PC-3 (cell line): ENCODE measurements at regions of chr17 and their contacts with region 1.

Region 1: DNA sequence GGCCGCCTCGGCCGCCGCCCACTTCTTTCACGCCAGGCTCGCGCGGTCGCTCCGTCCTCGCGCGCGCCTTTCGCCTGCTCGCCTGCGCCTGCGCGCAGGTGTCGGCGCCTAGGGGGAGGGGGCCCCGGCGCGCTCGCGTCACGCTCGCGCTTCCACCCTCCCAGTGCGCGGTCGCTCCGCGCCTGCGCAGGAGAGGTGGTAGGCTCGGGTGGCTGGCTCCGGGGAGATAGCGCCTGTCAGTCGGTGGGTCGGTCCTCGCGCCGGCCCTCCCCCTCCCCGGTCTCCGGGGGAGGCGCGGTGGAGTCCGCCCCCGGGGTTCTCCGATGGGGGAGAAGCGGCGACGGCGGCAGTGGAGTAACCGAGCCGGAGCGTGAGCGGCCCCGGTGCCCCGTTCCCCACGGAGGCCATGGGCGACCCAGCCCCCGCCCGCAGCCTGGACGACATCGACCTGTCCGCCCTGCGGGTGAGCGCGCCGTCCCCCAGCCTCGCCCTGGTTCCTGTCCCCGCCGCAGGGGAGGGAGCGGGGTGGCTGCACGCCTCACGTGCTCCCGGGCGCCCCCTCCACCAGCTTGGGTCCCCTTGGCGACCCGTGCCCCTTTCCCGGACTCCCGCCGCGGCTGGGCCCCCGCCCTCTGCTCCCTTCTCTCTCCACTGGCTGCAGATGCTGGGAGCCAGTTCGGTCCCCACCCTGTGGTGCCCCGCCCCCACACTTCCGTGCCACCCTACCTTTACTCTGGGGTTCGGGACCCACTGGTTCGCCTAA is at the start of gene MINK1:
- DNase-seq: peak; percentile 95
- ATAC-seq: peak; percentile 83
- H3K4me3 ChIP-seq: peak within 1 kb of the TSS; percentile 97
- H3K27ac ChIP-seq: peak within 1 kb of the TSS; percentile 60
- H3K4me1 ChIP-seq: peaks cover 24% of the 10 kb centered on the region
- H3K27me3 ChIP-seq: no peaks in the 10 kb centered on the region
- CTCF ChIP-seq: no peak
- total RNA-seq, gene MINK1: 44.5 and 64.8 TPM in 2 replicates

Region 2: DNA sequence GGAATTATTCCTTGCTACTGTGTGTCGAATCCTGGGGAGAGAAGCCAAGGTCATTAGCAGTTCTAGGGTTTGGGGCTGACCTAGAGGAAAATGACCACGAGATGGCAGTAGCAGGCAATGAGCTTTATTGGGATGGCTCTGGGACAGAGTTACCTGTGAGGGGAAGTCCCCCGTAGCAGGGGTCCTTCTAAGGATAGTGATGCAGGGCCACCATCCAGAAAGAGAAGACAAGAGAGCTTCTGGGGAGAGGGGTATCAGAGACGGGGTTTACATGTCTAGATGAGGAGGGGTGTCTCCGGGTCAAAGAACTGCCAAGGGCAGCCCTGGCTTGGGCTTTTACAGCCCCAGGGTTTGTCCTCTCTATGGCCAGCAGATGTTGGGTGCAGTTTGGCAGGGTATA is 266.6 kb before region 1 on chr17:
- CTCF ChIA-PET with region 1: no interaction called
- POLR2A ChIA-PET with region 1: no interaction called
- intact Hi-C with region 1: no loop called
- DNase-seq: peak; percentile 71
- ATAC-seq: peak; percentile 80
- H3K4me3 ChIP-seq: no peak overlapping the region
- H3K27ac ChIP-seq: no peak overlapping the region
- H3K4me1 ChIP-seq: no peaks in the 10 kb centered on the region
- H3K27me3 ChIP-seq: peaks cover 4% of the 10 kb centered on the region; the same call in 1 of the 2 replicates
- CTCF ChIP-seq: peak; percentile 73

Region 3: DNA sequence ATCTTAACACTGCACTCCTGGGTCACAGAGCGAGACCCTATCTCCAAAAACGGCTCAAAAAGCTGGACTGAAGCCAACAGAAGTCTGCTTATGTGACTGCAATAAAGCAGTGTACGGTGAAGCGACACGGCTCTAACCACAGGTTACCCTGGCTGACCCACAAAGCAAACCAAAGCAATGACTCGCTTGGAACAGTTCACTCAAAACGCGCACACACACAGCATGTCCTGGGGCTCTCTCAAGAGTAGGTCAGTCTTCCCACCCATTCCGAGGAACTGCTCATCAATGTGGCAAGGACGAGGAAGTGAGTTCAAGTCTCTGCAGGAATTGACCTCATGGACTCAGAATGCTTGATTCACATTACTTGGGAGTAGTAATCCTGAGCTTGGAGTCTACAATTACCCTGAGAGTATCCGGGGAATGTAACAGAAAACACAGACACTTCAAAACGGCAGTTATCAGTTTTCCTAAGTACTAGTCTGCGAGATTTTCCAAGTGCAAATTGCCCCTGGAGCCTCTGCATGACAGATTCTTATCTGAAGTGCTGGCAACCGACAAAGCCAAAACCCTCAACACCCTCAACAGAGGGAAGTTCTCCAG is 154.8 kb before region 1 on chr17:
- CTCF ChIA-PET with region 1: no interaction called
- POLR2A ChIA-PET with region 1: no interaction called
- intact Hi-C with region 1: no loop called
- DNase-seq: peak; percentile 89
- ATAC-seq: peak; percentile 78
- H3K4me3 ChIP-seq: peak overlapping the region; percentile 11; the same call in 1 of the 2 replicates
- H3K27ac ChIP-seq: peak overlapping the region; percentile 83
- H3K4me1 ChIP-seq: peaks cover 30% of the 10 kb centered on the region
- H3K27me3 ChIP-seq: no peaks in the 10 kb centered on the region
- CTCF ChIP-seq: no peak

Region 4: GRCh38 chr17:4806777-4807604 is 26.4 kb before region 1 on chr17 and contains the start of gene PLD2:
- CTCF ChIA-PET with region 1: no interaction called
- POLR2A ChIA-PET with region 1: no interaction called
- intact Hi-C with region 1: loop called (anchors 1 kb)
- DNase-seq: peak; percentile 84
- ATAC-seq: peak; percentile 97
- H3K4me3 ChIP-seq: peak within 1 kb of the TSS; percentile 78
- H3K27ac ChIP-seq: no peak within 1 kb of the TSS
- H3K4me1 ChIP-seq: peaks cover 9% of the 10 kb centered on the region
- H3K27me3 ChIP-seq: no peaks in the 10 kb centered on the region
- CTCF ChIP-seq: no peak
- total RNA-seq, gene PLD2: 24.3 and 27.3 TPM in 2 replicates

Region 5: GRCh38 chr17:4881761-4882555 is 48.6 kb after region 1 on chr17:
- CTCF ChIA-PET with region 1: no interaction called
- POLR2A ChIA-PET with region 1: no interaction called
- intact Hi-C with region 1: loop called (anchors 10 kb)
- DNase-seq: peak; percentile 67
- ATAC-seq: peak; percentile 91
- H3K4me3 ChIP-seq: no peak overlapping the region
- H3K27ac ChIP-seq: no peak overlapping the region
- H3K4me1 ChIP-seq: no peaks in the 10 kb centered on the region
- H3K27me3 ChIP-seq: no peaks in the 10 kb centered on the region
- CTCF ChIP-seq: peak; percentile 88